Naive thymus-derived CD8-positive, alpha-beta T cell (primary cell): ENCODE measurements at regions of chr17 and their contacts with region 1.

Region 1: GRCh38 chr17:45161019-45161825 is 453 bp upstream of the HEXIM2 start:
- DNase-seq: peak; percentile 91 to 100 (median 99)
- ATAC-seq: peak; percentile 93 to 95
- H3K4me3 Mint-ChIP-seq: peak overlapping the region; percentile 88 to 98 (median 95)
- H3K27ac Mint-ChIP-seq: peak overlapping the region; percentile 96 to 99 (median 98)
- H3K4me1 Mint-ChIP-seq: peaks cover 14 to 47% (median 38%) of the 10 kb centered on the region in 4 donors
- H3K27me3 Mint-ChIP-seq: no peaks in the 10 kb centered on the region

Region 2: DNA sequence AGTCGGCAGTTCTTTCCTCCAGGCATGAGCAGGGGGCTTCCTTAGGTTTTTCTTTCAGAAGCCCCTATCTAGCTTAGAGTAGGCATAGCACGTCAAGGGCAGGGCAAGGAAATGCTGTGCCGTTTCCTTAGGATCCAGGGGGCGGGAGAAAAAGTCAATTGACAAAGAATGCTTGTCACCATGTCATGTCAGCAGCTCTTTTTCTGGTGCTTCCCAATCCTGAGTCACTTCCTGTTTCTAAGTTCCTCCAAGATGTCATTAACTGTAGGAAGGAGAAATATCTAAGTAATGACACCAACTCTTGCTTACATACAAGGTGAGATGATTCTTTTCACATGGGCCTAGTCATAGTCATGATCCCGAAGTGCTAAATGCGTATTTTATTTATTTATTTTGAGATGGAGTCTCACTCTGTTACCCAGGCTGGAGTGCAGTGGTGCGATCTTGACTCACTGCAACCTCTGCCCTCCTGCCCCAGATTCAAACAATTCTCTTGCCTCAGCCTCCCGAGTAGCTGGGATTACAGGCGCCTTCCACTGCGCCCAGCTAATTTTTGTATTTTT is 366.3 kb before region 1 on chr17:
- POLR2A ChIA-PET with region 1: no interaction called
- DNase-seq: no peak
- ATAC-seq: no peak
- H3K4me3 Mint-ChIP-seq: no peak overlapping the region
- H3K27ac Mint-ChIP-seq: no peak overlapping the region
- H3K4me1 Mint-ChIP-seq: no peaks in the 10 kb centered on the region
- H3K27me3 Mint-ChIP-seq: peaks cover 0 to 4% (median 0%) of the 10 kb centered on the region in 5 donors

Region 3: GRCh38 chr17:45021607-45022287 is 139.5 kb before region 1 on chr17:
- POLR2A ChIA-PET with region 1: no interaction called
- DNase-seq: peak; percentile 35 to 78 (median 64)
- ATAC-seq: peak; percentile 79 to 82
- H3K4me3 Mint-ChIP-seq: peak overlapping the region; percentile 59 to 88 (median 73)
- H3K27ac Mint-ChIP-seq: peak overlapping the region in 2 of 10 donors; percentile 66 to 81
- H3K4me1 Mint-ChIP-seq: peaks cover 19 to 30% (median 21%) of the 10 kb centered on the region in 4 donors
- H3K27me3 Mint-ChIP-seq: peaks cover 13 to 43% (median 27%) of the 10 kb centered on the region in 5 donors

Region 4: DNA sequence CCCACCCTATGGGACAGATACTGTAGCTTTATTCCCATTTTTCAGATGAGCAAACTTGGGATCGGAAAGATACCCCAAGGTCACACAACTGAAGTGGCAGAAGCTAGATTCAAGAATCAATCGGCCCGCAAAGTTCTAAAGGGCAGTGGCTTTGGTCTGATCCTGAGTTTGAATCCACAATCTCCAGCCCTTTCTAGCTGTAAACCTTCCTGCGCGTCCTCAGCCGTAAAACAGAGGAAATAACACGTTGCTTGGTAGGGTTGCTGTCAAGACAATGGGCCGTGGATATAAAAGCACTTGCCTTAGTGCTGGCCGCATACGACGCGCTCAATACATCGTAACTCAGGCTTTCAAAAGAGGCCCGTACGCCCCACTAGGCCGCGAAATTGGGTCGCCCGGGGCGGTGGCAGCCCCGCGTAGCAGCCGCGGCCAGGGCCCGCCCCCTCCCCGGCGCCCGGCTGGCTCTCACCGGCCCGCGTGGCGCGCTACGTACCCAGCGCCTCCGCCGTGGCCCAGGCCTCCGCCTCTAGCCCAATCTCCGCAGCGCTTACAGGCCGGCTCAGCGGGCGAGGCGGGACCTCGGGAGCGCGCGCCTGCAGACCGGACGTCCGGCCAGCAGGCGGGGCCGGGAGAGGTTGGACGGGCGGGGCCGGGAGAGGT is 110.0 kb before region 1 on chr17 and contains the start of gene DCAKD:
- POLR2A ChIA-PET with region 1: interaction called, 15 read pairs
- DNase-seq: peak; percentile 79 to 92 (median 86)
- ATAC-seq: peak; percentile 88 to 94
- H3K4me3 Mint-ChIP-seq: peak within 1 kb of the TSS; percentile 87 to 97 (median 92)
- H3K27ac Mint-ChIP-seq: peak within 1 kb of the TSS; percentile 90 to 99 (median 97)
- H3K4me1 Mint-ChIP-seq: peaks cover 10 to 49% (median 44%) of the 10 kb centered on the region in 4 donors
- H3K27me3 Mint-ChIP-seq: no peaks in the 10 kb centered on the region
- polyA plus RNA-seq, gene DCAKD: 13.1 to 16.1 (median 16.0) TPM

Region 5: GRCh38 chr17:45172454-45173286 is 11.4 kb after region 1 on chr17:
- POLR2A ChIA-PET with region 1: interaction called, 100 read pairs
- DNase-seq: peak; percentile 30 to 85 (median 48)
- ATAC-seq: peak; percentile 85
- H3K4me3 Mint-ChIP-seq: peak overlapping the region; percentile 75 to 89 (median 82)
- H3K27ac Mint-ChIP-seq: peak overlapping the region; percentile 91 to 98 (median 94)
- H3K4me1 Mint-ChIP-seq: peaks cover 6 to 32% (median 30%) of the 10 kb centered on the region in 4 donors
- H3K27me3 Mint-ChIP-seq: no peaks in the 10 kb centered on the region

Region 6: DNA sequence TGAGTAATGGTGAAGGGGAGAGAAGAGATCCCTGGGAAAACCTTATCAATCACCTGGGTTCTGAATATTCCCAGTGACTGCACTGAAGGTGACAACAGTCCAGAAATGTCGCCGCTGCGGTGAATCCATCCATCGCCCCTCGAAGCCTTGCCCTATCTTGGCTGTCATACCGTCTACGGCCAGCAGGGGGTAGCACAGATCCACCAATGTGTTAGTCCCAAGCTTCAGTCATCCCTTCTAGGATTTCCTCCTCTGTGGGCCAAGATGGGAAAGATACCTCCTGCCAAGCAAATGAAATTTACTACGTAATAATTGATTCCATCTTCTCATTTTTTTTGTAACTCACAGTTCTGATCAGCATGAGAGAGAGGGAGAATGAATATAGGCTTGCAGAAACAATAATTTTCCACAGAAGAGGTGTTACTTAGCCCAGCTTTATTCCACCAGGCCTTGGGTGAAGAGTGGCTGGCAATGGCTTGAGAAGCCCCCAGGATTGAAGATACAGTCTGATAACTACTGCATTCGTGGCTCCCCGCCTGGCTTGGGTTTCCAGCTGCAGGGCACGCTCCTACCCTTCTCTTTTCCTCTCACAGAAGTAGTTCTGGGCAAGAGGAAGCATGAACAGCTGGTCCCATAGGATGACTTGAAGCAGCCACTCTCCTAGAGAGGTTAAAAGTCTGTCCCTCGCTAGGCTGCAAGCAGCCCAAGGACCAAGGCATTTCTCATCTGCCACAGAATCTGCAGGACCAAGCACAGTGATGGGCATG is 57.9 kb after region 1 on chr17:
- POLR2A ChIA-PET with region 1: interaction called, 14 read pairs
- DNase-seq: peak; percentile 70 to 95 (median 85)
- ATAC-seq: peak; percentile 20 to 28
- H3K4me3 Mint-ChIP-seq: peak overlapping the region; percentile 89 to 96 (median 92)
- H3K27ac Mint-ChIP-seq: peak overlapping the region; percentile 74 to 96 (median 87)
- H3K4me1 Mint-ChIP-seq: peaks cover 24 to 55% (median 41%) of the 10 kb centered on the region in 4 donors
- H3K27me3 Mint-ChIP-seq: no peaks in the 10 kb centered on the region

Region 7: GRCh38 chr17:45247429-45248131 is 86.4 kb after region 1 on chr17:
- POLR2A ChIA-PET with region 1: interaction called, 11 read pairs
- DNase-seq: peak; percentile 90 to 98 (median 92)
- ATAC-seq: peak; percentile 76 to 79
- H3K4me3 Mint-ChIP-seq: peak overlapping the region; percentile 85 to 93 (median 92)
- H3K27ac Mint-ChIP-seq: peak overlapping the region; percentile 92 to 99 (median 98)
- H3K4me1 Mint-ChIP-seq: peaks cover 20 to 73% (median 71%) of the 10 kb centered on the region in 4 donors
- H3K27me3 Mint-ChIP-seq: no peaks in the 10 kb centered on the region

Region 8: GRCh38 chr17:45284176-45285140 is 123.2 kb after region 1 on chr17:
- POLR2A ChIA-PET with region 1: no interaction called
- DNase-seq: peak in 7 of 10 donors; percentile 12 to 68 (median 27)
- ATAC-seq: peak in 1 of 2 donors; percentile 50
- H3K4me3 Mint-ChIP-seq: no peak overlapping the region
- H3K27ac Mint-ChIP-seq: peak overlapping the region in 9 of 10 donors; percentile 36 to 87 (median 71)
- H3K4me1 Mint-ChIP-seq: peaks cover 2 to 24% (median 11%) of the 10 kb centered on the region in 4 donors
- H3K27me3 Mint-ChIP-seq: no peaks in the 10 kb centered on the region

Region 9: GRCh38 chr17:45317112-45317928 is 156.1 kb after region 1 on chr17:
- POLR2A ChIA-PET with region 1: interaction called, 25 read pairs
- DNase-seq: peak; percentile 95 to 100 (median 100)
- ATAC-seq: peak; percentile 85 to 86
- H3K4me3 Mint-ChIP-seq: peak overlapping the region; percentile 76 to 96 (median 94)
- H3K27ac Mint-ChIP-seq: peak overlapping the region; percentile 88 to 99 (median 96)
- H3K4me1 Mint-ChIP-seq: peaks cover 56 to 88% (median 85%) of the 10 kb centered on the region in 4 donors
- H3K27me3 Mint-ChIP-seq: peaks cover 0 to 4% (median 0%) of the 10 kb centered on the region in 5 donors